Activated T-helper 1 cell treated with anti-CD3 and anti-CD28 coated beads, Interleukin-12 subunit alpha, Interleukin-12 subunit beta, Interleukin-2, Interleukin-4 antibody, amounts not matched to agents 30 ng/mL and 10 ng/mL and 1 ng/mL, durations not matched to agents 14 hours and 24 hours and 36 hours (primary cell): ENCODE measurements at regions of chr2 and their contacts with region 1.

Region 1: DNA sequence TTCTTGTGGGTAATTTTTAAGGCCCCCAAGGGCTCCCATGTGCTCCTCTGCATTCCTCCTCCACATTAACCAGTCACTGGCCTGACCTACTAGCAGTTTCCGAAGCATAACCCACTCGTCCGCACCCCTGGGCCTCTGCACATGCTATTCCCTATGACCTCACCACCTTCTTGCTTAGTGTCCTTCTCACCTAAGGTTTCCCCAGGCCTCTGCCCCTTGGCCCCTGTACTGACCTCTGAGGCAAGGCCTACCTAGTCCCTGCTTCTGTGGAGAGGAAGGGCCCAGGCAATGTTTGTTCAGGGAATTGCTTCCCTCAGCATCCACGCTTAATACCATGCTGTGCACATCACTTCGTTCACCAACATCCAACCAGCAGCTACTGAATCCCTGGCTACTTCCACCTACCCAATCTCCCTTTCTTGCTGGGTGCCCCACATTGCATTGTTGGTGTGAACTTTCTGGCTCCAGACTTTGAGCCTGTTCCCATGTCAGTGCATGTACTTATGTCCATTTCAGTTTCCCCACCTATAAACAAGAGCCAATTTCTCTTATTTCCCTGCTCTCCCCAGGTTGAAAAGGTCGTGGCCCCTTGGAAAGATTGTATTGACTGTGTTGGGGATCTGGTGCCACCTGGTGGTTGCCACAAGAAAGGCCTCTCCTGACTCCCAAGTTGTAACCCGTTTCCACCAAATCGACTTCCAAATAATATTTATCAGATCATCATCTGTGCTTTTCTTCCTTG is 19.2 kb upstream of the TMEM177 start:
- DNase-seq: no peak
- H3K4me3 Mint-ChIP-seq: no peak overlapping the region
- H3K27ac Mint-ChIP-seq: no peak overlapping the region
- H3K4me1 Mint-ChIP-seq: peaks cover 19% of the 10 kb centered on the region
- H3K27me3 Mint-ChIP-seq: peaks cover 7% of the 10 kb centered on the region

Region 2: GRCh38 chr2:119283860-119284331 is 375.9 kb before region 1 on chr2:
- intact Hi-C with region 1: no loop called
- DNase-seq: no peak
- H3K4me3 Mint-ChIP-seq: no peak overlapping the region
- H3K27ac Mint-ChIP-seq: no peak overlapping the region
- H3K4me1 Mint-ChIP-seq: no peaks in the 10 kb centered on the region
- H3K27me3 Mint-ChIP-seq: peaks cover 2% of the 10 kb centered on the region

Region 3: DNA sequence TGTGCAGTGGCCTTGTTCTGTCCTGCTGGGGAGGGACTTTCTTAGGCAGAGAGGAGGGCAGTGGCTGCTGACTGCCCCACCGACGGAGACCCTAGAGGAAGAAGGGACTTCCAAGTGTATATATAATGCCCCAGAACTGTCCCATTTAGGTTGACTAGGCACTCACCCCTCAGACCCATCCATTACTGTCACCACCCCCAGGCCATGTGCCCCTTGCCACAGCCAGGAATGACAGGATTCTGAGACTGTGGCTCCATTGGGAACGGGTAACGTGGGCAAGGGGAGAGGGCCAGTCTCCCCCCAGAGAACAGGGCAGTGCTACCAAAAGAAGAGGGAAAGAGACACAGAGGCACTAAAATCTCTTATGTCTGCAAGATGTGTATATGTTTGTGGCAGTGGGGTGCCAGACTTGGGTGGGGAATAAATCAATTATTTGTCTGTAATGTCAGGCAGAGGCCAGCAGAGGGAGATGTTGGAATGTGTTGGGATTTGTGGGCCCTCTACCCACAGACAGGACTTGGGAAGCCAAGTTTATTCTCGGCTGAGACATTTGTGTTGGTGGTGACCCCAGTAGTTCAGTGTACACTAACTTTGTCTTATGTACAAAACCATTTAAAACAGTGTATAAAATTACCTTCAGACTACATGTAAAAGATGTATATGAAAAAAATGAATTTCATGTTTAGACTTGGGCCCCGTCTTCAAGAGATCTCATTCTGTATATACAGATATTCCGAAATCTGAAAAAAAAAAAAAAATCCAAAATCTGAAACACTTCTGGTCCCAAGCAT is 252.1 kb before region 1 on chr2:
- intact Hi-C with region 1: loop called (anchors 5 kb)
- DNase-seq: no peak
- H3K4me3 Mint-ChIP-seq: no peak overlapping the region
- H3K27ac Mint-ChIP-seq: no peak overlapping the region
- H3K4me1 Mint-ChIP-seq: no peaks in the 10 kb centered on the region
- H3K27me3 Mint-ChIP-seq: peaks cover 7% of the 10 kb centered on the region

Region 4: DNA sequence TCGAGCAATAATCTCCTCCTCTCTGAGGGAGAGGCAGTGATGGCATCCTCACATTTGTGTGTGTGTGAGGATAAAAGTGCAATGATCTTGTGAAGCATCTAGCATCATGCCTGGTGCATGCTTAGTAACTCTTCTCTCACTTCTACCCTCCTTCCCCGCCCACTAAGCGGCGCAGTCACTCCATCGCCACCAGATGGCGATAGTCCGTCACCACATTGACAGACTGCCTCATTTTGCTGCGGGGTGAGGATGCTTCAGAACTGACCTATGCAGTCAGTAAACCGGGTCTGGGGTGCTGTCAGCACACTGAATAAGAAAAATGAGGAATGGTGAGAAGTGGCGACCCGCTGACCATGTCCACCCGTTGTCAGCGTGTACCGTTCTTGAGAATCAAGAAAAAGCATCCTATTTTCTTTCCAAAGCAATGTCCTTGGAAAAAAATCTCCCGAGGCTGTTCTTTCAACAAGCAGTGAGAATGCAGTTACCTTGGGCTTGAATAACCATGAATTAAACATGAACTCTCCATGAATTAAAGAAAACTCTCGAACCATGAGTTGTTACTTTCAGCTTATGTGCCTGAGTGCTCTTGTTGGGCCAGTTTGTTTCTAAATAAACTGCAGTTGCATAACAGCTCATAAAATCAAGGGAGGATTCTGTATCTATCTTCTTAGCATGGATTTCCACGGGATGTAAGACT is 18.1 kb before region 1 on chr2:
- intact Hi-C with region 1: loop called (anchors 1 kb)
- DNase-seq: peak; percentile 60
- H3K4me3 Mint-ChIP-seq: no peak overlapping the region
- H3K27ac Mint-ChIP-seq: no peak overlapping the region
- H3K4me1 Mint-ChIP-seq: peaks cover 7% of the 10 kb centered on the region
- H3K27me3 Mint-ChIP-seq: peaks cover 6% of the 10 kb centered on the region

Region 5: DNA sequence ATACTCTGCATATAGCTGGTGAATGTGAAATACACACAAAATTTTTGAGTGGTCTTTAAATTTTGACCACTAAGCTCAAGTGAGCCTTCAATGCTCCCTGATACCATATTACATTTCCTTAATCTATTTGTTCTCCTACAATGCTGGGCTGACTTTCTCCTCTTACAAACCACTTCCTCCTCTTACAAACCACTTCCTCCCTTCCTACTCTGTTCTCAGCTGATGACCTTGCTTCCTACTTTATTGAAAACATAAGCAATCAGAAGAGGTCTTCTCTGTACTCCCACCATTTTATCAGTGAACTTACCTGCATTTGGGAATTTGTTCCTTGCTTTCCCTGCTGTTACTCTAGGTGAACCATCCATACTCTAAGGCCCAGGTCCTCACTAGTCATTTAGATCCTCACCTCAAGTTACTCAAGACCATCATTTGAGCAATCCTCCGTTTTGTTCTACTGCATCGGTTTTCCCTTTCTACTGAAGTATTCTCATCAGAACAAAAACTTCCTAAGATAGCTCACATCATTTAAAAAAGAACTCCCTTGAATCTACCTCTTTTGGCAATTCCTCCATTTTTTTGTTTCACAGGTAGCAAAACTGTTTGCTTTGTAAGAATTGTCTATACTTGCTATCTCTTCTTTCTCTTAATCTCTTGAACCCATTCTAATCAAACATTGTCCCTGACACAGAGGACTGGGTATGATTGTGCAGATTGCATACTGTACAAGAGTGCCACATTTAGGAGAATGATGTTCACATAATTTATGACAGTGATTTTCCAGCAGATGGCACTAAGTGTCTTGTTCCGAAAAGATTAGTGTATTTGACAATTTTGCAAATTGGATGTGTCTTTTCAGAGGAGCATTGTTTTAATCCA is 449.7 kb after region 1 on chr2:
- intact Hi-C with region 1: no loop called
- DNase-seq: peak; percentile 13
- H3K4me3 Mint-ChIP-seq: peak overlapping the region; percentile 29
- H3K27ac Mint-ChIP-seq: no peak overlapping the region
- H3K4me1 Mint-ChIP-seq: peaks cover 16% of the 10 kb centered on the region
- H3K27me3 Mint-ChIP-seq: peaks cover 14% of the 10 kb centered on the region